Activated CD4-positive, alpha-beta memory T cell treated with anti-CD3 and anti-CD28 coated beads for 36 hours (primary cell): ENCODE measurements at regions of chr17 and their contacts with region 1.

Region 1: GRCh38 chr17:14300575-14301278 is at the start of gene HS3ST3B1:
- DNase-seq: peak; percentile 100
- H3K4me3 Mint-ChIP-seq: peak within 1 kb of the TSS; percentile 93
- H3K27ac Mint-ChIP-seq: peak within 1 kb of the TSS; percentile 92
- H3K4me1 Mint-ChIP-seq: peaks cover 49% of the 10 kb centered on the region
- H3K27me3 Mint-ChIP-seq: peaks cover 26% of the 10 kb centered on the region
- total RNA-seq, gene HS3ST3B1: 13.4 to 13.9 TPM

Region 2: DNA sequence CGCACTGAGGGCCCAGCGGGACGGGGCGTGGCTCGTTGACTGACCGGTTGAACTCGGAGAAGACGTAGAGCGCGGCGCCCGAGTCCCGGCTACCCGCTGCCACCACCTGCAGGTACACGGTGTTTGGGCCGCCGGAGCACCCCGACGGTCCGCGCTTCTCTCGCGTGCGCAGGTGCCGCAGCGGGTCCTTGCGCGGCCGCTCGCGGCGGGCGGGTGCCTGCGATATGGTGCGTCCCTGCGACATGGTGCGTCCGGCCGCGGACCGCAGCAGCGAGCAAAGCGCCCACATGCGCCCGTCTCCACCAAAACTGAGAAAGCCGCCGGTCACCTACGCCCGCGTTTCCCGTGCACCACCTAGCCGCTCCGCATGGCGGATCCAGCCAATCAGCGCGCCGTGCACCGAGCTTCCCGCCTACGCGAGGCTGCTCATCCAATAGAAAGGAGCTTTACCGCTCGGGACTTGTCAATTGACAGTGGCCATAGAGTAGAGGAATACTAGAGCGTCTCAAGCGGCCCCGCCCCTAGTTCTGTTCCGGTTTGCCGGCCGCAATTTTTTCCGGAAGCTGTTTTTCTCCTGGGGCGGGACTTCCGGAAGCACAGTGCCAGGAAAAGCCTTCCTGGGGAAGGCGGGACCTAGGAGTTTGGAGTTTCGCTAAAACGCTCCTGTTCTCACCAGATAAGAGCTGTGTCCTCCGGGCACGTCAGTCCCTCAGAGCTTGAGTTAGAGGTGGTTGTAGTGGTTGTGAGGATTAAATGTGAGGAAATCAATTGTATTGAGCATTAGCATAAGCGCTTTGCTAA is 1282.9 kb before region 1 on chr17 and contains the start of gene ELAC2:
- CTCF ChIA-PET with region 1: interaction called, 3 read pairs
- POLR2A ChIA-PET with region 1: no interaction called
- intact Hi-C with region 1: loop called (anchors 2 kb)
- DNase-seq: peak; percentile 97
- H3K4me3 Mint-ChIP-seq: peak within 1 kb of the TSS; percentile 94
- H3K27ac Mint-ChIP-seq: peak within 1 kb of the TSS; percentile 97
- H3K4me1 Mint-ChIP-seq: peaks cover 26% of the 10 kb centered on the region
- H3K27me3 Mint-ChIP-seq: no peaks in the 10 kb centered on the region
- total RNA-seq, gene ELAC2: 63.1 to 64.2 TPM

Region 3: GRCh38 chr17:14069251-14070021 is 231.3 kb before region 1 on chr17 and contains the start of gene COX10:
- CTCF ChIA-PET with region 1: interaction called, 9 read pairs
- POLR2A ChIA-PET with region 1: interaction called, 37 read pairs
- intact Hi-C with region 1: loop called (anchors 1 kb)
- DNase-seq: peak; percentile 90
- H3K4me3 Mint-ChIP-seq: peak within 1 kb of the TSS; percentile 98
- H3K27ac Mint-ChIP-seq: peak within 1 kb of the TSS; percentile 89
- H3K4me1 Mint-ChIP-seq: peaks cover 58% of the 10 kb centered on the region
- H3K27me3 Mint-ChIP-seq: no peaks in the 10 kb centered on the region
- total RNA-seq, gene COX10: 22.9 to 23.6 TPM

Region 4: GRCh38 chr17:14203388-14203787 is 97.3 kb before region 1 on chr17:
- CTCF ChIA-PET with region 1: interaction called, 9 read pairs
- POLR2A ChIA-PET with region 1: interaction called, 27 read pairs
- intact Hi-C with region 1: loop called (anchors 1 kb)
- DNase-seq: peak; percentile 60
- H3K4me3 Mint-ChIP-seq: no peak overlapping the region
- H3K27ac Mint-ChIP-seq: peak overlapping the region; percentile 77
- H3K4me1 Mint-ChIP-seq: peaks cover 85% of the 10 kb centered on the region
- H3K27me3 Mint-ChIP-seq: no peaks in the 10 kb centered on the region

Region 5: GRCh38 chr17:14427900-14428647 is 127.3 kb after region 1 on chr17:
- CTCF ChIA-PET with region 1: interaction called, 3 read pairs
- POLR2A ChIA-PET with region 1: interaction called, 4 read pairs
- intact Hi-C with region 1: loop called (anchors 2 kb)
- DNase-seq: peak; percentile 70
- H3K4me3 Mint-ChIP-seq: peak overlapping the region; percentile 67
- H3K27ac Mint-ChIP-seq: peak overlapping the region; percentile 90
- H3K4me1 Mint-ChIP-seq: peaks cover 57% of the 10 kb centered on the region
- H3K27me3 Mint-ChIP-seq: no peaks in the 10 kb centered on the region

Region 6: DNA sequence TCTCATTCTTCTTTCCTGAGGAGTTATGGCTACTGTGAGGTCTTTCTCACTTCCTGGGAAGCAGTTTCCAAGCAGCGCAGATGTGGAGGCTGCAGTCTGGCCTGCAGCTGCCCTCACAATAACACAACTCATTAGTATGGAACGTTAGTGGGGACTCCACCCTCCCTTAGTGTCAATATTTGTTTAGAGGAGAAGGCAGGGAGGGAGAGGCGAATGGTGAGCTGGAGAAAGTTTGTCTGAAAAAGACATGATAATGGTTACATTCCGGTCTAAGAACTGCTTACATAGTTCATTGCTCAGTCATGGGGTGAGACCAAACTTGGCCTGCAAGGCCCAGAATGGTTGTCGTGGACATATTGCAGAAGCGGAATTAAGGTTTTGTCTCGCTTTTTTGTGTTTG is 170.3 kb after region 1 on chr17:
- CTCF ChIA-PET with region 1: no interaction called
- POLR2A ChIA-PET with region 1: no interaction called
- intact Hi-C with region 1: no loop called
- DNase-seq: no peak
- H3K4me3 Mint-ChIP-seq: no peak overlapping the region
- H3K27ac Mint-ChIP-seq: no peak overlapping the region
- H3K4me1 Mint-ChIP-seq: no peaks in the 10 kb centered on the region
- H3K27me3 Mint-ChIP-seq: peaks cover 2% of the 10 kb centered on the region

Region 7: GRCh38 chr17:14926526-14927122 is 625.9 kb after region 1 on chr17:
- CTCF ChIA-PET with region 1: interaction called, 5 read pairs
- POLR2A ChIA-PET with region 1: no interaction called
- intact Hi-C with region 1: loop called (anchors 1 kb)
- DNase-seq: peak; percentile 57
- H3K4me3 Mint-ChIP-seq: no peak overlapping the region
- H3K27ac Mint-ChIP-seq: no peak overlapping the region
- H3K4me1 Mint-ChIP-seq: no peaks in the 10 kb centered on the region
- H3K27me3 Mint-ChIP-seq: peaks cover 4% of the 10 kb centered on the region